Activated naive CD4-positive, alpha-beta T cell treated with anti-CD3 and anti-CD28 coated beads for 36 hours (primary cell): ENCODE measurements at regions of chr1 and their contacts with region 1.

Region 1: GRCh38 chr1:156338180-156338973 is at the starts of genes CCT3 and TSACC:
- DNase-seq: peak; percentile 99
- H3K4me3 Mint-ChIP-seq: peak within 1 kb of the TSS; percentile 97
- H3K27ac Mint-ChIP-seq: peak within 1 kb of the TSS; percentile 93
- H3K4me1 Mint-ChIP-seq: peaks cover 32% of the 10 kb centered on the region
- H3K27me3 Mint-ChIP-seq: no peaks in the 10 kb centered on the region
- total RNA-seq, gene CCT3: 332 to 349 TPM
- total RNA-seq, gene TSACC: 0.57 TPM in 1 of 2 experiments, not detected in the other

Region 2: GRCh38 chr1:155911156-155912055 is 427.0 kb before region 1 on chr1 and contains the start of gene RIT1:
- CTCF ChIA-PET with region 1: interaction called, 3 read pairs
- intact Hi-C with region 1: loop called (anchors 1 kb)
- DNase-seq: peak; percentile 89
- H3K4me3 Mint-ChIP-seq: peak within 1 kb of the TSS; percentile 99
- H3K27ac Mint-ChIP-seq: peak within 1 kb of the TSS; percentile 97
- H3K4me1 Mint-ChIP-seq: peaks cover 21% of the 10 kb centered on the region
- H3K27me3 Mint-ChIP-seq: no peaks in the 10 kb centered on the region
- total RNA-seq, gene RIT1: 17.1 to 21.3 TPM

Region 3: GRCh38 chr1:156020292-156021089 is 317.9 kb before region 1 on chr1 and contains the start of gene SSR2:
- CTCF ChIA-PET with region 1: no interaction called
- intact Hi-C with region 1: loop called (anchors 5 kb)
- DNase-seq: peak; percentile 94
- H3K4me3 Mint-ChIP-seq: peak within 1 kb of the TSS; percentile 84
- H3K27ac Mint-ChIP-seq: peak within 1 kb of the TSS; percentile 91
- H3K4me1 Mint-ChIP-seq: peaks cover 28% of the 10 kb centered on the region
- H3K27me3 Mint-ChIP-seq: no peaks in the 10 kb centered on the region
- total RNA-seq, gene SSR2: 141 to 142 TPM

Region 4: DNA sequence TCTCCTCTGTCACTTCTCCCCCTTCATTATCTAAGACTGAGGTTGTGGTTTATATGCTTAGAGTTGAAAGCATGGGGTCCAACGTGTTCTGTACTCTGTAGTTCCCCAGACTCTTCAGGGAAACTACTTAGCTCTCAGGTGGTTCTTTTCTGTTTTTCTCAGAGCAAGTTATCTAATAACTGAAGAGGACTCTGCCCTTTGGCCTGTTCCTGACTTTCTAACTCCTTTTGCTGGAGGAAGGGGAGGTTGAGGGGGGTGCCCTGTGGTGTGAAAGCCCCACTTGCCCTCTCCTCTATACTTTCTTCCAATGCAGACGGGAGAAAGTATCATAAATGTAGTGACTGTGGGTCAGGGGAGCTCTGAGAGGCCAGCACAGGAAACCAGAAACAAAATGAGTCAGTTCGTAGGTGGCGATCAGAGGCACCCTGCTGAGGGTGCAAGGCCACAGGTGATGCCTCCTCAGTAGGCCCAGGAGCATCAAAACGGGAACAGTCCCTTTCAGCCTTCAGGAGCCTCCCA is 139.5 kb before region 1 on chr1:
- CTCF ChIA-PET with region 1: no interaction called
- intact Hi-C with region 1: loop called (anchors 1 kb)
- DNase-seq: peak; percentile 72
- H3K4me3 Mint-ChIP-seq: no peak overlapping the region
- H3K27ac Mint-ChIP-seq: no peak overlapping the region
- H3K4me1 Mint-ChIP-seq: peaks cover 66% of the 10 kb centered on the region
- H3K27me3 Mint-ChIP-seq: no peaks in the 10 kb centered on the region

Region 5: DNA sequence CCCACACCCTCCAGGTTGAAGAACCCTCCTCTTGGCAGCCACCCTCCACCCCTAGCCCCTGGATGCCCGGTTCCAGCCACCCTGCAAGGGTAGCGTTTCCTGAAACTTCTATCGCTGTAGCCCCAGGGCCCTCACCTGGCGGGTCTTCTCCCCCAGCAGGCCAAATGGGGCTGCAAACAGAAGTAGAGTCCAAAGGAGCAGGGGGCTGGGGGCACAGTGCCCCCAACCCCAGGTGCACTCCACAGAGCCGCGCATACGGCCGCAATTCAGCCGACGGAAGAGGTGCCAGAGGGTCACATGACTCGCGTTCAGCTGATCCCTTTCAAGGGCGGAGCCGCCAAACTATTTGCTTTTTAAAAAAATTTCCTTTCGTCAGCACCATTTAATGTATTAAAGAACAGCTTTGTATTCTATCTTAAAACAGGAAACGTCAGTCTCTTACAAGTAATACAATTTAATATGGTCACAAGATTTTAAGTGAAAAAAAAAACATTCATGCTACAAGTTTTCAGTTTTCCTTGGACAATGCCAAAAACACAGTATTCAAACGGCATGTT is 42.9 kb before region 1 on chr1 and contains the start of gene GLMP:
- CTCF ChIA-PET with region 1: no interaction called
- intact Hi-C with region 1: loop called (anchors 5 kb)
- DNase-seq: peak; percentile 77
- H3K4me3 Mint-ChIP-seq: peak within 1 kb of the TSS; percentile 84
- H3K27ac Mint-ChIP-seq: no peak within 1 kb of the TSS
- H3K4me1 Mint-ChIP-seq: peaks cover 18% of the 10 kb centered on the region
- H3K27me3 Mint-ChIP-seq: no peaks in the 10 kb centered on the region
- total RNA-seq, gene GLMP: 10.0 to 10.1 TPM

Region 6: DNA sequence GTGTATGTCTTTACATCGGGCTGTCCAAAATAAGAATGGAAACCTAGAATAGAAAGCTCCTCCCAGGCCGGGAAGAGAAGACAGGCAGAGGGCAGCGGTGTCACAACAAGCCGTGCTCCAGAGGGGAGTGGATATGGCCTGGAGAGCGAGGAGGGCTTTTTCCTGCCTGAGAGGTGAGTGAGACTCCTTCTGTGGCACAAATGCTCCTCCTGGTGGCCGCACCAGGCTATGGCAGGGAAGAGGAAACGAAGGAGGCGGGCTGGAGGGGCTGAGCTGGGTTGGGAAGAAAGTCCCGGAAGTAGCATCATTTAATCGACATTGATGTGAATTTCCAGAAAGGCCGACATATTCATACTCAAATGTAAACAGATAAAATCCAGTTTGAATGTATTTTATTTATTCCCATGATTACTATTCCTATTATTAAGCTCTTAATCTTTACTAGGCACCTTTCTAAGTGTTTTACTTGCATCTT is 107.4 kb after region 1 on chr1:
- CTCF ChIA-PET with region 1: no interaction called
- intact Hi-C with region 1: loop called (anchors 1 kb)
- DNase-seq: peak; percentile 93
- H3K4me3 Mint-ChIP-seq: no peak overlapping the region
- H3K27ac Mint-ChIP-seq: peak overlapping the region; percentile 22
- H3K4me1 Mint-ChIP-seq: peaks cover 21% of the 10 kb centered on the region
- H3K27me3 Mint-ChIP-seq: peaks cover 28% of the 10 kb centered on the region

Region 7: DNA sequence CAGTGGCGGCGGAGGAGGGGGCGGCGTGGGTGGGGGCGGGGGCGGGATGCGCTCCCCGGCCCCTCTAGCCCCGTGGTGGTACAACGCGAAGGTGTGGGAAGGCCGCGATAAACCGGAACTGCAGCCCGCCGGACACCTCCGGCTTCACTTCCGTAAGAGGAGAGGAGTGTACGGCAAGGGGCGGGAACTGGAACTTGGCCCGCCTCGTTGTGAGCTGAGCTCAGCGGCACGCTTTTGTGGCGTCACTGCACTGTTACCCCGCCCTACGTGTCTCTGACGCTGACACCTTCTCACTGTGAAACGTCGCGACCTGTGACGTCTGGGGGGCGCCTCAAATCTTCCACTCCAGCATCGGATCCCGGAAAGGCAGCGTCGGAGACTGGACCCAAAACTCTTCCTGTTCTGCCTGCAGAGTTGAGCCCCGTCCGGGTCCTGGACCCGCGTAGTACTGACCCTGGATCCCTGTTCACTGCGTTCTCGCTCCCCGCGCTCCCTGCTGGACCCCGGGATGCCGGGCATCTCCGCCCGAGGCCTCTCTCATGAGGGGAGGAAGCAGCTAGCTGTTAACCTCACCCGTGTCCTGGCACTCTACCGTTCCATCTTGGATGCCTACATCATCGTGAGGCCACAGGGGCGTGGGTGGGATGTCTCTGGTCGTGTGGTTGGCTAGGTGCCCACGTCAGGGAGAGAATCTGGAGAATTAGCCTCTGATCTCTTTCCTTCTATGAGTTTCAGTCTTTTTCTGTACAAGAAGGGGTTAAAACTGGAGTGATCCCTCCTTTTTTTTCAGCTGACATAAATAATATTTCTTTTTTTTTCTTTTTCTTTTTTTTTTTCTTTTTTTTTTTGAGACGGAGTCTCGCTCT is 390.5 kb after region 1 on chr1 and contains the start of gene ISG20L2:
- CTCF ChIA-PET with region 1: interaction called, 3 read pairs
- intact Hi-C with region 1: loop called (anchors 5 kb)
- DNase-seq: peak; percentile 99
- H3K4me3 Mint-ChIP-seq: no peak within 1 kb of the TSS
- H3K27ac Mint-ChIP-seq: peak within 1 kb of the TSS; percentile 98
- H3K4me1 Mint-ChIP-seq: peaks cover 27% of the 10 kb centered on the region
- H3K27me3 Mint-ChIP-seq: no peaks in the 10 kb centered on the region
- total RNA-seq, gene ISG20L2: 24.8 to 28.7 TPM

Region 8: DNA sequence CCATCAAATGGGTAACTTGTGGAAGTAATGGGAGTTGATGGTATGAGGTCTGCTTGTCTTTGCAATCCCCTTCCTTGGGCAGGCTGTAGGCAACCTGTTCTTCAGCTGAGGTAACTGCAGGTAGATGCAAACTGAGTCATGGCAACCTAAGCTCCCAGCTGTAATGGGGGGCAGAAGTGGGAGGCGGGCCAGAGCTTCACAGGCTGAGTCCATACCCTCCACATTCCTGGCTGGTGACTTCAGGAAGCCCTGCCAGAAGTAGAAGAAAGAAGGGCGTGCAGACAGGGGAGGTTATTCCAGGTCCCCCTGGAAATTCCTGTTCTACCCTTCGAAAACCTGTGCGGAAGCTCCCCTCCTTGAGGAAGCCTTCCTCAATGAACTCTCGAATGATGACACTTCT is 662.3 kb after region 1 on chr1:
- CTCF ChIA-PET with region 1: no interaction called
- intact Hi-C with region 1: no loop called
- DNase-seq: no peak
- H3K4me3 Mint-ChIP-seq: no peak overlapping the region
- H3K27ac Mint-ChIP-seq: no peak overlapping the region
- H3K4me1 Mint-ChIP-seq: no peaks in the 10 kb centered on the region
- H3K27me3 Mint-ChIP-seq: no peaks in the 10 kb centered on the region